WTC11 (cell line): ENCODE measurements at regions of chr16 and their contacts with region 1.

Region 1: DNA sequence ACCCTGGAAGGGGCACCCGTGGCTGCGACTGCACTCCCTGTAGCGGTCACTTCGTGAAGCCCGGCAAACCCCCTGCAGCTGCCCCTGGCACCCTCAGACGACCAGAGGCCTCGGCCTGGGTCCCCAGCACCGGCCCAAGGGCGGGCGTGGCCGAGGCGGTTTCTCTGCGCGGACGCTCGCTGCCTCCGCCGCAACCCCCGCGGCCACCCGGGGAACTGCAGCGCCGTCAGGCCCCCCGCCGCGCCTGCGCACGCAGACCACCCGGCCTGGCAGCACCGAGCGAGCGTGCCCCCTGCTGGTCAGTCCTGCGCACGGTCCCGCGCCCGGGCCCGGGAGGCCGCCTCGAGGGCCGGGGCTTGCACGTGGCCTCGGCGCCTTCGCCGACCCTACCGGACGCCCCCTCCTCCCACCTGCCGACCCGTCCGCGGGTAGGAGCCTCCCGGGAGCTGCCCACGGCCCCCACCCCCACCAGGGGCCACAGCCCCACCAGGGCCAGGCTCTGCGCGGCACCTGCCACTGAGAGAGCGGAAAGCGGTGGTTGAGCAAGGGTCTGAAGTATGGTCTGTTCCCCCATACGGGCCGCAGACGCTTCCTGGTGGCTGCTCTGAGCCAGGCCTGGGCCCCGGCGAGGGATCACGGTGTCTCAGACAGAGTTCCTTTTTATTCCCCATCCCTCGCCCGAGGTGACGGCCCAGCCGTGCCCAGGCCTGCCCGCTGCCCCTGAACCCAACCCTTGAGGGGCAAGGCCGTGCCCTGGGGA is 11.5 kb upstream of the HS3ST6 start:
- DNase-seq: peak; percentile 88
- ATAC-seq: peak; percentile 73
- H3K4me3 Mint-ChIP-seq: peak overlapping the region; percentile 39; the same call in 1 of the 2 replicates
- H3K27ac Mint-ChIP-seq: no peak overlapping the region
- H3K4me1 Mint-ChIP-seq: peaks cover 9% of the 10 kb centered on the region
- H3K27me3 Mint-ChIP-seq: peaks cover 42% of the 10 kb centered on the region
- CTCF ChIP-seq: peak; percentile 98

Region 2: GRCh38 chr16:1823821-1824220 is 105.9 kb before region 1 on chr16:
- CTCF ChIA-PET with region 1: interaction called, 10 read pairs
- POLR2A ChIA-PET with region 1: no interaction called
- DNase-seq: peak; percentile 67
- ATAC-seq: peak; percentile 50
- H3K4me3 Mint-ChIP-seq: peak overlapping the region; percentile 45; the same call in 1 of the 2 replicates
- H3K27ac Mint-ChIP-seq: peak overlapping the region; percentile 93
- H3K4me1 Mint-ChIP-seq: peaks cover 16% of the 10 kb centered on the region
- H3K27me3 Mint-ChIP-seq: peaks cover 2% of the 10 kb centered on the region; the same call in 1 of the 2 replicates
- CTCF ChIP-seq: no peak

Region 3: DNA sequence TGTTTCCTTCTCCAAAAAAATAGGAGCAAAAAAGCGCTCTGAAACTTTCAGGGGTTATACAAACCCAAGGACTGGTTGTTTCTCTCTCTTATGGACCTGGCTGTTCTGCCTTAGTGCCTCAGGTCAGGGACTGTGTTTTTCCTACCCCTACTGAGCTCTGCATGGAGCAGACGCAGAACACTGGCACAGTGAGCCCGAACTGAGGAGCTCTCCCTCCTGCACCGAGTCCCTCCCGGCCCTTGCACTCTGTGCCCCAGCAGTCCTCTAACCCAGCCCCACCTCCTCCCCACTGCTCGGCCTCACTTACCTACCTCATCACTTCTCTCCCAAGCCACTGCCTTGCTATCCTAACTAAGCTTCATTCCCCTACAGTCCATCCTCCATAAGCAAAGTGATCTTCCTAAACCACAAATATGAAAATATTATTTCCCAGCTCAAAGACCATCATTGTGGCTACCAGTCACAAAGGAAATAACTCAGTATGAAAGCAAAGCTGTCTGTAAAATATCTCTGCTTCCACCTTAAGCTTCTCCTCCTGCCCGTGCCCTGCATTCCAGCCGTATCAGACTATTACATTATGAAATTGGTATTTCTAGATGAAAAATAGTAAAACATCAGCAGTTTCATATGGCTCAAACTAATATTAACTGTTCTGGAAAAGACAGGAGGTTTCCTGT is 71.4 kb before region 1 on chr16:
- CTCF ChIA-PET with region 1: interaction called, 18 read pairs
- POLR2A ChIA-PET with region 1: no interaction called
- DNase-seq: no peak
- ATAC-seq: peak; percentile 67
- H3K4me3 Mint-ChIP-seq: no peak overlapping the region
- H3K27ac Mint-ChIP-seq: no peak overlapping the region
- H3K4me1 Mint-ChIP-seq: no peaks in the 10 kb centered on the region
- H3K27me3 Mint-ChIP-seq: peaks cover 80% of the 10 kb centered on the region
- CTCF ChIP-seq: no peak

Region 4: DNA sequence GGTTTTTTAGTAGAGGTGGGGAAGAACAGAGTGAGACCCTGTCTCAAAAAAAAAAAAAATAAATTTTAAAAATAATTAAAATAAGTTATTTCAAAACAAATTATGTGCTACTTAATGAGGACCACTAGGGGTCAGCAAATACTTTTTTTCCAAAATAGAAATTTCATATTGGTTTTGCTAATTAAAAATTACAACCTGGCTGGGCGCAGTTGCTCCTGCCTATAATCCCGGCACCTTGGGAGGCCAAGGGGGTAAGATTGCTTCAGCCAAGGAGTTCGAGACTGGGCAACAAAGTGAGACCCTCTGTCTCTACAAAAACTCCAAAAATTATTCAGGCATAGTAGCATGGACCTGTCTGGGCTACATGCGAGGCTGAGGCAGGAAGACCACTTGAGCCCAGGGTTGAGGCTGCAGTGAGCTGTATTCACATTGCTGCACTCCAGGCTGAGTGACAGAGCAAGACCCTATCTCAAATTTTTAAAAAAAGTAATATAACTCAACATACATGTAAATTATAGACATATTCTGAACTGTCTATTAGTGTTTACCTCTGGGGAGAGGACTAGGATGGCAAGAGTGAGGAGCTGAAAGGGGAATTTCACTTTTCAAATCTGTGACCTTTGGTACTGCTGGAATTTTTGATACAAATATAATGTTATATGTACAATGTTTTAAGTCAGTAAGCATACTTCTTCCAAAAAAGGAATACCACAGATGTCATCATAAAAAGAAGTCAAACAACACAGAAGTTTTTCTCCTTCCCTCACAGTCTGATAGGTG is 65.9 kb before region 1 on chr16:
- CTCF ChIA-PET with region 1: interaction called, 18 read pairs
- POLR2A ChIA-PET with region 1: no interaction called
- DNase-seq: no peak
- ATAC-seq: no peak
- H3K4me3 Mint-ChIP-seq: no peak overlapping the region
- H3K27ac Mint-ChIP-seq: no peak overlapping the region
- H3K4me1 Mint-ChIP-seq: no peaks in the 10 kb centered on the region
- H3K27me3 Mint-ChIP-seq: peaks cover 37% of the 10 kb centered on the region
- CTCF ChIP-seq: peak; percentile 62

Region 5: GRCh38 chr16:1913327-1914083 is 16.3 kb before region 1 on chr16:
- CTCF ChIA-PET with region 1: interaction called, 16 read pairs
- POLR2A ChIA-PET with region 1: interaction called, 3 read pairs
- DNase-seq: no peak
- ATAC-seq: no peak
- H3K4me3 Mint-ChIP-seq: no peak overlapping the region
- H3K27ac Mint-ChIP-seq: no peak overlapping the region
- H3K4me1 Mint-ChIP-seq: peaks cover 27% of the 10 kb centered on the region
- H3K27me3 Mint-ChIP-seq: peaks cover 43% of the 10 kb centered on the region
- CTCF ChIP-seq: no peak

Region 6: DNA sequence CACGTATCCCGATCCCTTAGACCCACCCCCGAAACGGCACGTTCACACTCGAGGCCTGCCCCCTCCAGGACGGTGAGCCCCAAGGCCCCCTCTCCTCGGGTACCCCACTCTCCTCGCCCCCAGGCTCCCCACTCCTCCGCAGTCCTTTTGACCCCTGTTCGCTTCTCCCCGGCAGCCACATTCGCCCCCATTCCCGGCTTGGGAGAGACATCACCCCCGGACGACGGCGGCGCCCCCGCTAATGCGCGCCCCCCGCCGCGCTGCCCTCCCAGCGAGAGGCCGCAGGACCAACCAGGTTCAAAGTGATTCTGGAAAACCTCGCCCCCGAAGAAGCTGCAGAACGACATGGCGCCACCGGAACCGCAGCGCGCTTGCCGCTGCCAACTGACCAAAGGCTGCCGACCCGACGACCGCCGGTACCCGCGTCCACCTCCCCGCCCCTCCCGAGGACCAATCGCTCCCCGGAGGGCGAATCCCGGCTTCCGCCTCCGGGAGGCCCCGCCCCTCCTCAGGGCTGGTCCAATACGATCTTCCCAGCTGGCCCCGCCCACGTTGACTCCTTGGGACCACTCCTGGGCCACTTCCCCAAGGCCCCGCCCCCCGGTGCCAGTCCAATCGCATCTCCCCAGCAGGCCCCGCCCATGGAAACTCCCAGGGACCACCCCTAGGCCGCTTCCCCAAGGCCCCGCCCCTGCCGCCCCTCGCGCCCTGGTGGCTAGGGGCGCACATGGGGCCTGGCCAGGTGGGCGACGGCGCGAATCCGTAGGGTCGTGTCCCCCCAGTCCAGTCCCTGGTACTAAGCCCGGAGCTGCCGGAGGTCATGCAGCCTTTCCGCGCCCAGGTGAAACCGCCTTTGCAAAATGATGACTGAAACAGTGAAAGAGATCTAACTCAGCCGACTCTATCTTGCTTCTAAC is 13.3 kb after region 1 on chr16 and contains the start of gene MSRB1:
- CTCF ChIA-PET with region 1: interaction called, 16 read pairs
- POLR2A ChIA-PET with region 1: no interaction called
- DNase-seq: peak; percentile 100
- ATAC-seq: peak; percentile 97
- H3K4me3 Mint-ChIP-seq: peak within 1 kb of the TSS; percentile 87
- H3K27ac Mint-ChIP-seq: peak within 1 kb of the TSS; percentile 60
- H3K4me1 Mint-ChIP-seq: peaks cover 22% of the 10 kb centered on the region
- H3K27me3 Mint-ChIP-seq: peaks cover 16% of the 10 kb centered on the region
- CTCF ChIP-seq: no peak
- total RNA-seq, gene MSRB1: 26.4 to 29.8 TPM (median 28.3 TPM) in 3 replicates

Region 7: GRCh38 chr16:1950047-1950446 is 20.3 kb after region 1 on chr16:
- CTCF ChIA-PET with region 1: interaction called, 10 read pairs
- POLR2A ChIA-PET with region 1: no interaction called
- DNase-seq: no peak
- ATAC-seq: no peak
- H3K4me3 Mint-ChIP-seq: no peak overlapping the region
- H3K27ac Mint-ChIP-seq: no peak overlapping the region
- H3K4me1 Mint-ChIP-seq: peaks cover 4% of the 10 kb centered on the region
- H3K27me3 Mint-ChIP-seq: peaks cover 8% of the 10 kb centered on the region; the same call in 1 of the 2 replicates
- CTCF ChIP-seq: no peak

Region 8: GRCh38 chr16:1980030-1980769 is 50.4 kb after region 1 on chr16:
- CTCF ChIA-PET with region 1: no interaction called
- POLR2A ChIA-PET with region 1: no interaction called
- DNase-seq: peak; percentile 45
- ATAC-seq: peak; percentile 1
- H3K4me3 Mint-ChIP-seq: peak overlapping the region; percentile 64
- H3K27ac Mint-ChIP-seq: no peak overlapping the region
- H3K4me1 Mint-ChIP-seq: peaks cover 26% of the 10 kb centered on the region
- H3K27me3 Mint-ChIP-seq: peaks cover 39% of the 10 kb centered on the region
- CTCF ChIP-seq: no peak